ENCODE measurements at regions of chr1 and their contacts with region 1.

Region 1: GRCh38 chr1:8396786-8397406 is 79.0 kb downstream of the SLC45A1 start:
- DNase-seq: no peak
- ATAC-seq: peak; percentile 71
- H3K4me3 ChIP-seq: no peak overlapping the region
- H3K4me3 Mint-ChIP-seq: peak overlapping the region in 9 of 10 donors; percentile 6 to 94 (median 45)
- H3K27ac ChIP-seq: peak overlapping the region; percentile 10
- H3K27ac Mint-ChIP-seq: peak overlapping the region; percentile 36 to 95 (median 85)
- H3K4me1 ChIP-seq: peaks cover 38 to 42% of the 10 kb centered on the region in 2 donors
- H3K4me1 Mint-ChIP-seq: peaks cover 48 to 78% (median 73%) of the 10 kb centered on the region in 7 donors
- H3K27me3 ChIP-seq: no peaks in the 10 kb centered on the region
- H3K27me3 Mint-ChIP-seq: no peaks in the 10 kb centered on the region

Region 2: DNA sequence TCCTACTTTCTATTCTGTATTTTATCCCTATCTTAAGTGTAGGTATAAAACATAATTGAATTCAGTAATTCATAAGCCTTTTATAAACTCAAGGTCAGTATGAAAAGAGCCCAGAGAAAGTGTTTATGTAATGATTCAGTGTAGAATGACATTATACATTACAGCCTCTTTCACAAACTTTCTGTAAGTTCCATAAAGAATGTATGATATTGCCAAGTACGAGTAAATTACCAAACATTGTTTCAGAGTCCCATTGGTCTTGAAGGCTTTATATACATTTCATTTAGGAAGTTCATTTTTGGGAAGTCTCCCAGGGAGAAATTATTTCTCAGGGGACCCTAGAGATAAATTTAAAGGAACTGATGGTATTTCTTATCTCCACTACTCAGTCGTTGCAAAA is 663.6 kb before region 1 on chr1:
- CTCF ChIA-PET with region 1: no interaction called
- POLR2A ChIA-PET with region 1: no interaction called
- intact Hi-C with region 1: no loop called
- DNase-seq: no peak
- ATAC-seq: no peak
- H3K4me3 ChIP-seq: no peak overlapping the region
- H3K4me3 Mint-ChIP-seq: no peak overlapping the region
- H3K27ac ChIP-seq: no peak overlapping the region
- H3K27ac Mint-ChIP-seq: no peak overlapping the region
- H3K4me1 ChIP-seq: no peaks in the 10 kb centered on the region
- H3K4me1 Mint-ChIP-seq: peaks cover 0 to 1% (median 0%) of the 10 kb centered on the region in 7 donors
- H3K27me3 ChIP-seq: no peaks in the 10 kb centered on the region
- H3K27me3 Mint-ChIP-seq: peaks cover 7 to 15% (median 7%) of the 10 kb centered on the region in 5 donors

Region 3: GRCh38 chr1:8364528-8365442 is 32.1 kb before region 1 on chr1:
- CTCF ChIA-PET with region 1: no interaction called
- POLR2A ChIA-PET with region 1: no interaction called
- intact Hi-C with region 1: no loop called
- DNase-seq: no peak
- ATAC-seq: no peak
- H3K4me3 ChIP-seq: no peak overlapping the region
- H3K4me3 Mint-ChIP-seq: no peak overlapping the region
- H3K27ac ChIP-seq: no peak overlapping the region
- H3K27ac Mint-ChIP-seq: peak overlapping the region in 2 of 9 donors; percentile 5 to 54
- H3K4me1 ChIP-seq: no peaks in the 10 kb centered on the region
- H3K4me1 Mint-ChIP-seq: peaks cover 4 to 33% (median 25%) of the 10 kb centered on the region in 7 donors
- H3K27me3 ChIP-seq: no peaks in the 10 kb centered on the region
- H3K27me3 Mint-ChIP-seq: no peaks in the 10 kb centered on the region

Region 4: DNA sequence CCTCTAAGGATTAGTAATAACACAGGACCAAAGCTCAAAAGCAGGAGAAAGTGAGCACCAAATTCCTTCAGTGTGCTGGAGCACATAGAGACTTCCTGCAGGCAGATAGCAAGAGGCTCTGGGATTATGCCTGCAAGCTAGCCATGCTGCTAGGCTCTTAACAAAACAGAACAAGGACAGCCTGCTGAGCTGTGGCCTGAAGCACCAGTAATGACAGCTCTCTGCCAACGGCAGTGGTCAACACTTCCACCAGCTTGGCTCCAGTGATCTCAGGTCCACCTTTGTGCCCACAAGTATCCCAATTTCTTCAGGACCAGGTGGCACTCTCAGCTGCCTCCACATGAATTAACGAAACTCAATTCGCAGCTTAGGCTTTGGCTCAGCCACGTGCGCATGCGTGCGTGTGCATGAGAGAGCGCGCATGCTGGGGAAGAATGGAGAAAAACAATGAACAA is 14.8 kb before region 1 on chr1:
- CTCF ChIA-PET with region 1: no interaction called
- POLR2A ChIA-PET with region 1: no interaction called
- intact Hi-C with region 1: loop called in 1 of 2 experiments (anchors 2 kb)
- DNase-seq: no peak
- ATAC-seq: no peak
- H3K4me3 ChIP-seq: no peak overlapping the region
- H3K4me3 Mint-ChIP-seq: peak overlapping the region; percentile 19 to 87 (median 78)
- H3K27ac ChIP-seq: peak overlapping the region; percentile 52
- H3K27ac Mint-ChIP-seq: peak overlapping the region in 7 of 9 donors; percentile 23 to 98 (median 90)
- H3K4me1 ChIP-seq: peaks cover 30 to 61% of the 10 kb centered on the region in 2 donors
- H3K4me1 Mint-ChIP-seq: peaks cover 51 to 96% (median 91%) of the 10 kb centered on the region in 7 donors
- H3K27me3 ChIP-seq: no peaks in the 10 kb centered on the region
- H3K27me3 Mint-ChIP-seq: no peaks in the 10 kb centered on the region

Measured in naive thymus-derived CD4-positive, alpha-beta T cell (primary cell).